ENCODE measurements at regions of chr7 and their contacts with region 1.

Region 1: DNA sequence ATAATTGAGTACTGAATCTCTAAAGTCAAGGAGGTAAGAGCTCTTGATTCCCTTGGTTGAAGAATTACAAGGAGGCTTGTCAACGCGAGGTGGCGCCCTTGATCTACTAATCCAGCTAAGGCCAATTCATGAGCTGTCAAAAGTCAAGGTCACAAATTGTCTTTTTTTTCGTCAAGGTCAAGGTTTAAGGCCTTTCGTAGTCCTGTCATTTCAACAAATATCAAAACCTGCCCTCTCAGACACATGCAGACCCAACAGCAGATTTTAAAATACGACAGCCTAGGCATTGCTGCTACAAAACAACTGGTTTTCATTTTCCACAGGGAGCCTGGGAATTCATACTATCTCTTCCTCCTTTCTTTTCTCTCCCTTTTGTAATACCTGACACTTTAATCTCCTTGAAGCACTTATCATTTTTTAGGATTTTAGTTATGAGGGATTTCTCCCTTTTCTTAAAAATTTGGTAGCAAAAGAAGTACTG is 3.6 kb downstream of the HOXA13 start:
- DNase-seq: peak; percentile 49 to 89 (median 78)
- ATAC-seq: peak in 2 of 4 experiments; percentile 34 to 46
- H3K4me3 ChIP-seq: no peak overlapping the region
- H3K4me3 Mint-ChIP-seq: no peak overlapping the region
- H3K27ac ChIP-seq: no peak overlapping the region
- H3K27ac Mint-ChIP-seq: no peak overlapping the region
- H3K4me1 ChIP-seq: peaks cover 3 to 52% of the 10 kb centered on the region in 2 experiments
- H3K4me1 Mint-ChIP-seq: peaks cover 37 to 40% (median 39%) of the 10 kb centered on the region in 3 donors
- H3K27me3 ChIP-seq: peaks cover 33 to 60% of the 10 kb centered on the region in 2 experiments
- H3K27me3 Mint-ChIP-seq: peaks cover 71 to 81% of the 10 kb centered on the region in 2 donors

Region 2: DNA sequence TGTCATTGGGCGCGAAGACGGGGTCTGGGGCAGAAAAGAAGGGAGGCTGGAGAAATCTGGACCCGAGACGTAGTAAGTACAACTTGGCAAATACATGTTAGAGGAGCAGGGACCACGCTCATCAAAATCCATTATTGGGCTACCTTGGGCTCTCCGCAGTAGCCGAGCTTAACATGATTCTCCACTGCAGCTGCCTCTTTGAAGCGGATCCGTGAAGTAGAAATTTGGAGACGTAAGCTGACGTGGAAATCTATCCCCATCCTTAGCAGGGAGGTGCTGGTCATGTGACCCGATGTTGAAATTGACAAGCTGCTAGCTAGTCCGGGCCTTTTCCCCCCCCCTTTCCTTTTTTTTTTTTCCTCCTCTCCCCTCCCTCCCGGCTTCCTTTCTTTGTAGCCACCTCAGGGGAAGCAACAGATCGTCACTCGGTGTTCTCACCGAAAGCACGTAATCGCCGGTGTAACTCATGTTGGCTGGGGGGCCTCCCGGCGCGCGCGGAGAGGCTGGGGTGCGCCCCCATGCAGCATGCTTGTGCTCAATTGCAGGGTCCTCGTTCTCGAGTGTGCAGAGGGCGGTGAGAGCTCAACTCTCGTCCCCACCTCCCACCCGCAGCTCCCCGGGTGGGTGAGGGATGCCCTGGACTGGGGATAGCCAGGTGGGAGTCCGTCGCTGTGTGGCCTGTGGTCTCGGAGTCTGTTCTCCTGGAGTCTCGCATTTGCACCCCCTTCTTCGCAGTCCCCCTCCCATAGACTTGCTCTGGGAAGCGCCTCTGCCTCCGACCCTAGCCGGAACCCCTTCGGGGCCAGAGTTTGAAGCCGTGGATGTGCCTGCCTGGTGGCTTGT is 11.1 kb before region 1 on chr7 and contains the start of gene HOXA11:
- CTCF ChIA-PET with region 1: interaction called, 13 to 26 read pairs
- POLR2A ChIA-PET with region 1: interaction called in 1 of 2 experiments, 3 read pairs
- DNase-seq: peak in 5 of 35 experiments; percentile 1 to 47 (median 17)
- ATAC-seq: peak in 1 of 4 experiments; percentile 48
- H3K4me3 ChIP-seq: peak within 1 kb of the TSS; percentile 37 to 55
- H3K4me3 Mint-ChIP-seq: peak within 1 kb of the TSS; percentile 52 to 71 (median 71)
- H3K27ac ChIP-seq: no peak within 1 kb of the TSS
- H3K27ac Mint-ChIP-seq: peak within 1 kb of the TSS; percentile 17 to 85
- H3K4me1 ChIP-seq: peaks cover 27 to 65% of the 10 kb centered on the region in 2 experiments
- H3K4me1 Mint-ChIP-seq: peaks cover 51 to 66% (median 59%) of the 10 kb centered on the region in 3 donors
- H3K27me3 ChIP-seq: peaks cover 36 to 95% of the 10 kb centered on the region in 2 experiments
- H3K27me3 Mint-ChIP-seq: peaks cover 57 to 91% of the 10 kb centered on the region in 2 donors
- total RNA-seq, gene HOXA11: not detected

Region 3: DNA sequence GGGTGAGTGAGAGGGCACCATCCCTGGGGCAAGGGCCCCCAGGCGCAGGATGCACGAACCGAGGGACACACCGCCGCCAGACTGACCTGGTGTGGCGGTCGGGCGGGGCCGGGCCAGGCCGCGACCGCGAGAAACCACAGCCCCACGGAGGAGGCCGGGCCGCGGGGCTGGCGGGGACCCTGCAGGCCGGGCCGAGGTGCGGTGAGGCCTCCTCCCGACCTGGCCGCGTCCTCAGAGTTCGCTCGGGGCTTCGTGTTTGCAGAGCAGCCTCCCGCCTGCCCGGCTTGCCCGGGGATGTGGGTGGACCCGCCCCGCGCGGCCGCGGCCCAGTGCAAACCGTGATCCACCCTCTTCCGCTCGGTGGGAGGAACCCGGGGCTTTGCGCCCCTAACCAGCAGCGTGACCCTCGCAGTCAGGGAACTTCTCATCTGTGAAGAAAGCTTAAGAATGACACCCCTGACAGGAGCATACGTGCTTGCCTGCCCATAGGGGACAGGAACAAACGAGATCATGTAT is 24.2 kb after region 1 on chr7:
- CTCF ChIA-PET with region 1: no interaction called
- POLR2A ChIA-PET with region 1: no interaction called
- DNase-seq: no peak
- ATAC-seq: peak in 1 of 4 experiments; percentile 37
- H3K4me3 ChIP-seq: no peak overlapping the region
- H3K4me3 Mint-ChIP-seq: no peak overlapping the region
- H3K27ac ChIP-seq: no peak overlapping the region
- H3K27ac Mint-ChIP-seq: no peak overlapping the region
- H3K4me1 ChIP-seq: peaks cover 0 to 3% of the 10 kb centered on the region in 2 experiments
- H3K4me1 Mint-ChIP-seq: peaks cover 5 to 10% (median 8%) of the 10 kb centered on the region in 3 donors
- H3K27me3 ChIP-seq: peaks cover 34 to 40% of the 10 kb centered on the region in 2 experiments
- H3K27me3 Mint-ChIP-seq: peaks cover 76 to 77% of the 10 kb centered on the region in 2 donors

Region 4: DNA sequence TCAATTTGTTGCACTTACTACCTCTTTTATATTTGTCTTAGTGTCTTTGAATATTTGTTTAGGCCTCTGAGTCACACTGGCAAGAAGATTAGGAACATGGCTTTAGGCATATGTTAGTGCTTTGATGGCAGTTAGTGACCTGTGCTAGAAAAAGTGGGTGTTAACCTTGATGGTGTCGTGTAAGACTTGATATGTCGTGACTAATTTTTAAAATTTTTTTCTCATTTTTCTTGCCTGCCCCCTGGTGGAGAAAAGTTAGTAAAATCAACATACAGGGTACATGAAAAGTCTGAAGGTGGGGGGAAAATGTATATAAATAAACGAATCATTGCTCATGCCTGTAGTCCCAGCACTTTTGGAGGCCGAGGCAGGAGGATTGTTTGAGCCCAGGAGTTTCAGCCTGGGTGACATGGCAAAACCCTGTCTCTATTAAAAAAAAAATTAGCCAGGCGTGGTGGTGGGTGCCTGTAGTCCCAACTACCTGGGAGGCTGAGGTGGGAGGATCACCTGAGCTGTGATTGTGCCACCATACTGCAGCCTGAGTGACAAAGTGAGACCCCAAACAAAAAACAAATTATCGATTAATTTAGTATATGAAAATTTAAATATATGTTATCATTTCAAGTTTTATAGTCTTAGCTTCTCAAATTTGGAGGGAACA is 588.2 kb after region 1 on chr7:
- CTCF ChIA-PET with region 1: interaction called, 4 to 11 read pairs
- POLR2A ChIA-PET with region 1: no interaction called
- DNase-seq: peak in 11 of 35 experiments; percentile 3 to 66 (median 11)
- ATAC-seq: peak in 3 of 4 experiments; percentile 49 to 55 (median 55)
- H3K4me3 ChIP-seq: no peak overlapping the region
- H3K4me3 Mint-ChIP-seq: no peak overlapping the region
- H3K27ac ChIP-seq: no peak overlapping the region
- H3K27ac Mint-ChIP-seq: no peak overlapping the region
- H3K4me1 ChIP-seq: no peaks in the 10 kb centered on the region
- H3K4me1 Mint-ChIP-seq: peaks cover 15 to 22% (median 21%) of the 10 kb centered on the region in 3 donors
- H3K27me3 ChIP-seq: no peaks in the 10 kb centered on the region
- H3K27me3 Mint-ChIP-seq: no peaks in the 10 kb centered on the region

Region 5: GRCh38 chr7:28020302-28020940 is 824.1 kb after region 1 on chr7:
- CTCF ChIA-PET with region 1: interaction called, 8 to 23 read pairs
- POLR2A ChIA-PET with region 1: no interaction called
- DNase-seq: peak in 27 of 35 experiments; percentile 1 to 73 (median 12)
- ATAC-seq: peak; percentile 66 to 73 (median 71)
- H3K4me3 ChIP-seq: no peak overlapping the region
- H3K4me3 Mint-ChIP-seq: no peak overlapping the region
- H3K27ac ChIP-seq: no peak overlapping the region
- H3K27ac Mint-ChIP-seq: no peak overlapping the region
- H3K4me1 ChIP-seq: peaks cover 0 to 5% of the 10 kb centered on the region in 2 experiments
- H3K4me1 Mint-ChIP-seq: peaks cover 8 to 17% (median 13%) of the 10 kb centered on the region in 3 donors
- H3K27me3 ChIP-seq: no peaks in the 10 kb centered on the region
- H3K27me3 Mint-ChIP-seq: no peaks in the 10 kb centered on the region

Region 6: DNA sequence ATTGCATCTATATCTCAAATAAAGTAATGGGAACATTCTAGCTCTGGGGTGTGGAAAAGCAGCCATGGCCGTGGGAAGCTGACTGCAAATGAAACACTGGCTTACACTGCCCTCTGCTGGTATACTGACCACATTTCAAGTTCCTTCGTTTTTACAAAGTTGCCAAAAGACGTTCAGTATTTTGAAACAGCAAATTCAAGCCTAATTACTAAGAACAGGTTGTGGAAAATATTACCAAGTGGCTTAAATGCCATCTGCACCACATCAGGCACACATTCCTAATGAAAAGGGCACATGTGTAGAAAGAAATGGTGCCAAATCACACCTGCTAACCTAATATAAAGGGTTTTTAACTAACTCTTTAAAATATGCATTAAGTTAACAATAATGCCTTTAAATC is 900.4 kb after region 1 on chr7:
- CTCF ChIA-PET with region 1: interaction called in 1 of 2 experiments, 13 read pairs
- POLR2A ChIA-PET with region 1: no interaction called
- DNase-seq: peak in 26 of 35 experiments; percentile 1 to 74 (median 21)
- ATAC-seq: peak in 3 of 4 experiments; percentile 36 to 54 (median 53)
- H3K4me3 ChIP-seq: no peak overlapping the region
- H3K4me3 Mint-ChIP-seq: no peak overlapping the region
- H3K27ac ChIP-seq: no peak overlapping the region
- H3K27ac Mint-ChIP-seq: no peak overlapping the region
- H3K4me1 ChIP-seq: no peaks in the 10 kb centered on the region
- H3K4me1 Mint-ChIP-seq: peaks cover 0 to 15% (median 6%) of the 10 kb centered on the region in 3 donors
- H3K27me3 ChIP-seq: no peaks in the 10 kb centered on the region
- H3K27me3 Mint-ChIP-seq: no peaks in the 10 kb centered on the region